Naive thymus-derived CD8-positive, alpha-beta T cell (primary cell): ENCODE measurements at regions of chr20 and their contacts with region 1.

Region 1: DNA sequence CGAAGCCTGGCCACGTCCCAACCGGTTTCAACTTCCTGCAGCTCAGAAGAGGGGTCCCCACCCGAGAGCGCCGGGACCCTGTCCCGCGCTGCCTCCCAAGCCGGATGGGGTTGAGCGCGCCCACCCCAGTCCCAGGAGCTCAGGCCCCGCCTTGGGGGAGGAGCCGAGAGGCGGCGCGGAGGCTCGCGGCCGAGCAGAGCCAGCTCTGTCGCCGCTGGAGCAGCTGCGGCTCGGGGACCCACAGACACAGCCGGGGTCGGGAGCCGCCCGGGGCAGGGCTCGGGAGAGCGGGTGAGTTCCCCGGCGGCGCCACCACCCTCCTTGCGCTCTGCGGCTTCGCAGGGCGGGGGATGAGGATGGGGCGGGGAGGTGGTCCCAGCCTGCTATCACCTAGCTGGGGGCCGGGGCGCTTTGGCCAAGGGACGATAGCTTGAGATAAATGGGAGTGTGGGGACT is at the start of gene PPP1R16B:
- DNase-seq: peak in 9 of 10 donors; percentile 73 to 86 (median 80)
- ATAC-seq: peak; percentile 68 to 72
- H3K4me3 Mint-ChIP-seq: peak within 1 kb of the TSS; percentile 85 to 96 (median 90)
- H3K27ac Mint-ChIP-seq: peak within 1 kb of the TSS; percentile 94 to 99 (median 96)
- H3K4me1 Mint-ChIP-seq: peaks cover 28 to 60% (median 58%) of the 10 kb centered on the region in 4 donors
- H3K27me3 Mint-ChIP-seq: peaks cover 0 to 2% (median 0%) of the 10 kb centered on the region in 5 donors
- polyA plus RNA-seq, gene PPP1R16B: 9.7 to 15.6 (median 13.4) TPM

Region 2: GRCh38 chr20:38790200-38791053 is 15.1 kb before region 1 on chr20:
- POLR2A ChIA-PET with region 1: interaction called, 12 read pairs
- DNase-seq: peak in 6 of 10 donors; percentile 20 to 80 (median 47)
- ATAC-seq: peak; percentile 82 to 96
- H3K4me3 Mint-ChIP-seq: peak overlapping the region in 4 of 10 donors; percentile 37 to 55 (median 46)
- H3K27ac Mint-ChIP-seq: peak overlapping the region in 7 of 10 donors; percentile 37 to 92 (median 65)
- H3K4me1 Mint-ChIP-seq: peaks cover 4 to 18% (median 10%) of the 10 kb centered on the region in 4 donors
- H3K27me3 Mint-ChIP-seq: no peaks in the 10 kb centered on the region

Region 3: DNA sequence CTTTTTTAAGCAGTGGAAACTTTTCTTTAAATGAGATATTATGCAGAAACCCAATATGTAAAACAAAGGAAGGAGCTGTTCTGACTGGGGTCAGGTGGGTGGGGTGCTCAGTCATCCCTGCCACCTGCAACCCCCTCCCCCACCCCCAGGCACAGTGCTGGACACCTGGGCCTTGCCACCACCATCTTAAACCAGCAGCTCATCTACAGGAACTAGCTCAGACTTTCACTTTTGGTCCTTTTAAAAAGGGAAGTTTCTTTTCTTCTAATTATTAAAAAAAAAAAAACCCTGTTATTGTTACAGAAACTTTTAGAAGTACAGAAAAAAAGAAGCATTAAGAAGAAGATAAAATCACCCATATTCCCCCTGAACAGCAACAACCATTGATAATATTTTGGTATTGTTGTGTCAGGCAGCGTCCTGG is 37.0 kb after region 1 on chr20:
- POLR2A ChIA-PET with region 1: interaction called, 11 read pairs
- DNase-seq: peak in 2 of 10 donors; percentile 15 to 49
- ATAC-seq: peak; percentile 59 to 64
- H3K4me3 Mint-ChIP-seq: peak overlapping the region; percentile 12 to 75 (median 60)
- H3K27ac Mint-ChIP-seq: peak overlapping the region; percentile 78 to 98 (median 90)
- H3K4me1 Mint-ChIP-seq: peaks cover 24 to 88% (median 70%) of the 10 kb centered on the region in 4 donors
- H3K27me3 Mint-ChIP-seq: no peaks in the 10 kb centered on the region

Region 4: GRCh38 chr20:38863024-38863851 is 57.7 kb after region 1 on chr20:
- POLR2A ChIA-PET with region 1: no interaction called
- DNase-seq: peak in 5 of 10 donors; percentile 13 to 40 (median 24)
- ATAC-seq: peak; percentile 85 to 86
- H3K4me3 Mint-ChIP-seq: peak overlapping the region in 8 of 10 donors; percentile 10 to 61 (median 24)
- H3K27ac Mint-ChIP-seq: peak overlapping the region; percentile 51 to 90 (median 70)
- H3K4me1 Mint-ChIP-seq: peaks cover 37 to 78% (median 50%) of the 10 kb centered on the region in 4 donors
- H3K27me3 Mint-ChIP-seq: no peaks in the 10 kb centered on the region

Region 5: DNA sequence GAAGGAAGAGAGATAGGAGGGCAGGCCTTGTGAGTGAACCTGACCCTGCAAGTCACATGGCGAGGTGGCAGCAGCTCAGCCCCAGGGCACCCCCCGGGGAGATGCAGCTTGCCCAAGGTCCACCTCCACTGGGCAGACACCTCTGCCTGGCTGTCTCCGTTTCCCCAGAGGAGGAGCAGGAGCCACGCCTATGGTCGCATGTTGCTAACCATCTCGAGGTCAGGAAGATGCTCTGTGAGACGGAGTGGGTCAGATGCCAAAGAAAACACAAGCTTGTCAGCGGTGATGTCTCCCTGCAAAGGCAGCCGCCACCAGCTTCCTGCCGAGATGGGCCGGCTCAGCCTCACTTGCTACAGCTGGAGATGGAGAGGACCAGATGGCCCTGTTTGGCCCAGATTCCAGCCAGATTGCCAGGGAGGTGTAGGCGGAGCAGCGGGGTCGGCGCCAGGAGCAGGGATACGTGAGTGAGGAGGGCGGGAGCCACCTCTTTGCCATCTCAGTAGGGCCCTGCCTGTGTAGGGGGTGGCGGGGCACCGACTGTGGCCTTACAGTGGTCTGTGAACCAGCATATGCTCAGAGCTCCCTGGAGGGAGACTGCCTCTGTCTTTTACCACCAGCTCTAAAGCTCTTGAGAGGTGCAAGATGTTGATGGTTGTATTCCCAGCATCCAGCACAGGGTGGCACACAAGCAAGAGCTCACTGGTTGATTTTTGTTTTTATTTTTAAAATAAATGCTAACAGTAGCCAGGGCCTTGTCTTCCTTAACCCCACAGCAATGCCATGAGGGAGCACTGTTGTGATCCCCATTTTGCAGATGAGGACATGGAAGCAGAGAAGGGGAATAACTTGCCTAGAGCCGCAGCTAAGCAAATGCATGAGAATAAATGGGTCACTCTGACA is 77.8 kb after region 1 on chr20:
- POLR2A ChIA-PET with region 1: interaction called, 30 read pairs
- DNase-seq: no peak
- ATAC-seq: peak; percentile 37 to 49
- H3K4me3 Mint-ChIP-seq: peak overlapping the region in 6 of 10 donors; percentile 8 to 71 (median 28)
- H3K27ac Mint-ChIP-seq: peak overlapping the region; percentile 65 to 94 (median 89)
- H3K4me1 Mint-ChIP-seq: peaks cover 29 to 71% (median 52%) of the 10 kb centered on the region in 4 donors
- H3K27me3 Mint-ChIP-seq: no peaks in the 10 kb centered on the region